ENCODE measurements at regions of chr7 and their contacts with region 1.

Region 1: GRCh38 chr7:35694781-35695472 is at the start of gene HERPUD2:
- DNase-seq: peak; percentile 89
- H3K4me3 Mint-ChIP-seq: peak within 1 kb of the TSS; percentile 96
- H3K27ac Mint-ChIP-seq: peak within 1 kb of the TSS; percentile 96
- H3K4me1 Mint-ChIP-seq: peaks cover 55% of the 10 kb centered on the region
- H3K27me3 Mint-ChIP-seq: no peaks in the 10 kb centered on the region
- total RNA-seq, gene HERPUD2: 24.9 and 25.8 TPM in 2 replicates

Region 2: GRCh38 chr7:34982371-34983019 is 712.4 kb before region 1 on chr7:
- intact Hi-C with region 1: no loop called
- DNase-seq: no peak
- H3K4me3 Mint-ChIP-seq: no peak overlapping the region
- H3K27ac Mint-ChIP-seq: no peak overlapping the region
- H3K4me1 Mint-ChIP-seq: peaks cover 30% of the 10 kb centered on the region
- H3K27me3 Mint-ChIP-seq: peaks cover 2% of the 10 kb centered on the region

Region 3: DNA sequence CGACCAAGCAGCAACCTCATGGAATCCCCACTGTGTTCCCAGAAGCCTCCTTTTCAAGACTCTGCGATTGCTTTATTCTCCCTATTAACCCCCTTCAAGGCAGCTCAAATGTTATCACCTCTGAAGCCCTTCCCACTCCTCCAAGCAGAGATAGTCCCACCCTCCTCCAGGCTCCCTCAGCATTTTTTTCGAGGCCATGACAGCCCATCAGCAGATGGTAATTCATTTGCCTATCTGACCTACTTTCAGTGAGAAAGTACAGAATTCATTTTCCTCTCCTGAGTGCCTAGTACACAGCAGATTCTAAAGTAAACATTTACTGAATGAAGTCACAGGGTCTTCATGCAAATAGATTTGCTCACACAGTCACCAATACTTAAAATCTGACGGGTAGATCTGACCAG is 47.8 kb before region 1 on chr7:
- intact Hi-C with region 1: no loop called
- DNase-seq: no peak
- H3K4me3 Mint-ChIP-seq: no peak overlapping the region
- H3K27ac Mint-ChIP-seq: no peak overlapping the region
- H3K4me1 Mint-ChIP-seq: peaks cover 18% of the 10 kb centered on the region
- H3K27me3 Mint-ChIP-seq: no peaks in the 10 kb centered on the region

Region 4: DNA sequence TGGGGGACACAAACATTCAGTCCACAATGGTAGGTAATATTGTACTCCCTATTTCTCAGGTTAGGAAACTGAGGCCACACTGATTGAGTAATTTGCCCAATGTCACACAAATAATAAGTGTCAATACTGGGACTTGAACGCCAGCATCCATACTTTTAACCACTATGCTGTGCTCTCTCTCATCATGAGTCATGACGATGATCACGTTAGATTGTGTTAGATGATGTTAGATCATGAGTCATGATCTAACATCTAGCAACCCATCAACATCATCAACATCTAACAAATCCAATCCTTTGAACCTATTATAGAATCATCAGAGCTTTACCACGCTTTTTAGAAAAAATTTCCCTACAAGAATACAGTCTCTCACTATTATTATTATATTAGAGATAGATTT is 28.1 kb after region 1 on chr7:
- intact Hi-C with region 1: loop called (anchors 1 kb)
- DNase-seq: no peak
- H3K4me3 Mint-ChIP-seq: no peak overlapping the region
- H3K27ac Mint-ChIP-seq: peak overlapping the region; percentile 81
- H3K4me1 Mint-ChIP-seq: peaks cover 52% of the 10 kb centered on the region
- H3K27me3 Mint-ChIP-seq: no peaks in the 10 kb centered on the region

Region 5: GRCh38 chr7:35729061-35729783 is 34.3 kb after region 1 on chr7:
- intact Hi-C with region 1: loop called (anchors 1 kb)
- DNase-seq: no peak
- H3K4me3 Mint-ChIP-seq: peak overlapping the region; percentile 3
- H3K27ac Mint-ChIP-seq: peak overlapping the region; percentile 47
- H3K4me1 Mint-ChIP-seq: peaks cover 45% of the 10 kb centered on the region
- H3K27me3 Mint-ChIP-seq: peaks cover 15% of the 10 kb centered on the region

Region 6: GRCh38 chr7:35816514-35816913 is 121.6 kb after region 1 on chr7:
- intact Hi-C with region 1: loop called (anchors 5 kb)
- DNase-seq: no peak
- H3K4me3 Mint-ChIP-seq: no peak overlapping the region
- H3K27ac Mint-ChIP-seq: no peak overlapping the region
- H3K4me1 Mint-ChIP-seq: peaks cover 59% of the 10 kb centered on the region
- H3K27me3 Mint-ChIP-seq: no peaks in the 10 kb centered on the region

Region 7: DNA sequence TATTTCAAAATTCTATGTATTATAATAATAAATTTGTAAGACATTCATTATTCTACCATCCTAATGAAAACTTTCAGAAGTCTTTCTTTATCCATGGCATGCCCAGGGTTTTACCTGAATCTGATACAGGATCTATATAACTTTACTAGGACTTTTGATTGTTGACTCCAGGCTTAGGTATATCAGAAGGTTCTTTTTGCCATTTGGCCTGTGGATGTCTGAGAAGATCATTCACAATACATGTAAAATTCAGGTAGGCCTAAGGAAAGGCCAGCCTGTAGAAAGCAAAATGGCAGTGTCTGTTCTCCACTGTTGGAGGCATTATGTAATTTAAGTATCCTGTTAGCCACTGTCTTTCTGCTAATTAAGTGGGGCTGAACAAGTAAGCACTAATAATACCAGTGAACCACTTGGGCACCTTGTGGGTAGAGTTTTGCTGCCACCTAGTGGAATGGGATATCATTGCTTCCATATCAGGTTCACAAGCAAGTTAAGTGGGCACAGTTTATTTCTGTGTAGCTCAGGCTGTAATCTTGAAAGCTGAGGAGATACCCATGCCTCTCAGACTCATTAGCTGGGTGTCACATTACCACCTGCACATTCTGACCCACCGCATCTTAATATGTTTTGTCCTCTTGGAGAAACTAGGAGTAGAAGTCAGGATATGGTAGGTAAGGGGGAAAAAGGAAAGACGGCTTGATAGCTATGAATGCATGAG is 211.4 kb after region 1 on chr7:
- intact Hi-C with region 1: loop called (anchors 5 kb)
- DNase-seq: peak; percentile 41
- H3K4me3 Mint-ChIP-seq: no peak overlapping the region
- H3K27ac Mint-ChIP-seq: no peak overlapping the region
- H3K4me1 Mint-ChIP-seq: peaks cover 3% of the 10 kb centered on the region
- H3K27me3 Mint-ChIP-seq: no peaks in the 10 kb centered on the region